ENCODE measurements at regions of chr1 and their contacts with region 1.

Region 1: DNA sequence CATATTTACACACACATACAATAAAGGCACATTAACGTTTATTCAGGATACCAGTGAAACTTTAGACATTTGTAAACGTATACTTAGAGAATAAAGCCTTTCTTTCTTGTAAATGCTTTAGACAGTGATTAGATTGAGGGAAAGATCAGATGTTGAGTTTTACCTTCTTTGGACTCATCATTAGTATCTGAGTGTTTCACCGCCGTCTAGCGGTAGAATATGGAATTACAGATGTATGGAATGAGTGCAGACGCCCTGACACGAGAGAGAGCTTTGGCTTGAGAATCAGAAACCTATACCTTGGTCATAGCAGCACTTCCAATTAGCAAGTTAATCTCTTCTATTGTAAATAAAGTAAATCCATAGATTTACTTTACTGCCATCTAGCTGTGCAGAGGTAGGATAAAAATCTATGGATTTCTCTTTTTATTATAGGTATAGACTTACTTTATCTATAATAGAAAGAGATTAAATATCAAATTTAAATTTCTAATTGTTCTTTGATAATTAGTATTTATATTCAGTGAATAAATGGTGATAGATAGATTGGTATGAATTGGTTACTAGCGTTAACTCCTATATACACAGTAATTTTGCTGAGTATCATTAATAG is 12.6 kb downstream of the FLG2 start:
- H3K4me3 ChIP-seq: no peak overlapping the region
- H3K27ac ChIP-seq: no peak overlapping the region
- H3K4me1 ChIP-seq: no peaks in the 10 kb centered on the region
- CTCF ChIP-seq: no peak

Region 2: GRCh38 chr1:152367434-152367833 is 20.2 kb after region 1 on chr1:
- CTCF ChIA-PET with region 1: interaction called, 17 read pairs
- POLR2A ChIA-PET with region 1: no interaction called
- H3K4me3 ChIP-seq: no peak overlapping the region
- H3K27ac ChIP-seq: no peak overlapping the region
- H3K4me1 ChIP-seq: no peaks in the 10 kb centered on the region
- CTCF ChIP-seq: no peak

Region 3: DNA sequence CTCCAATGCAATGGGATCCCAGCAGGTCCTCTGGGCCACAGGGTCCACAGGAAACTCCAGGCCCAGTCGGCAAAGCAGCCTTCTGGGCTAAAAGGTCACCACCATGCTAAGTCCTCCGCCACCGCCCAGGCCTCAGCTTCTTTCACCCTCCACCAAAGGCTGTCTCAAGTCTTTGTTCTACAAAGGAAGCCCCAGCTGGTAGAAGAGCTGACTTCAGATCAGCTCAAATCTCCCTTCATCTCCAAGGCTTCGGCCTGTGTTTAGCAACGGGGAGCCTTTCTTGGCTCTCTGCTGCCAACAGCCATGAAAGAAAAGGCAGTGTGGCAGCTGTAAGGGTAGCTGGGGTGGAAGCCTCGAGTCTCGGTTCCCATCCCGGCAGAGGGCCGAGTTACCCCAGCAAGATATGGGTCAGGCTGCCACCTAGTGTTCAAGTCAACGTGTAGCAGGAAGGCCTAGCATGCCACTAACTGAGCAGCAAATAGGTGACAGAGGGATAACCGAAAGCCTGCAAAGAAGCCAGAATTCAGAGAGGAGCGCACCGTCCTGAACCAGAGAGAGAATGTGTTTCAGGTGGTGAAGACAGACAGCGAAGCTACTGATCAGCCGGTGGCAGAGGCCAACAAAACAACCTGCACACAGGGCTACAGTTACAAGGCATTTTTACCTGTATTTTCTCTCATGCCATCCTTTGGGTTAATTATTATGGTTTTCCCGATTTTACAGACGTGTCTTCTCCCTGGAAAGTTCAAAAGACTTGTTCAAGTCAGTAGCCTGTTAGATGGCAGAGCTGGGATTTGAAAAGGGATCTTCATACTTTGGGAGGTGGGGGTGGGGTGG is 93.6 kb after region 1 on chr1:
- CTCF ChIA-PET with region 1: interaction called, 19 read pairs
- POLR2A ChIA-PET with region 1: no interaction called
- H3K4me3 ChIP-seq: no peak overlapping the region
- H3K27ac ChIP-seq: no peak overlapping the region
- H3K4me1 ChIP-seq: no peaks in the 10 kb centered on the region
- CTCF ChIP-seq: peak; percentile 79

Region 4: DNA sequence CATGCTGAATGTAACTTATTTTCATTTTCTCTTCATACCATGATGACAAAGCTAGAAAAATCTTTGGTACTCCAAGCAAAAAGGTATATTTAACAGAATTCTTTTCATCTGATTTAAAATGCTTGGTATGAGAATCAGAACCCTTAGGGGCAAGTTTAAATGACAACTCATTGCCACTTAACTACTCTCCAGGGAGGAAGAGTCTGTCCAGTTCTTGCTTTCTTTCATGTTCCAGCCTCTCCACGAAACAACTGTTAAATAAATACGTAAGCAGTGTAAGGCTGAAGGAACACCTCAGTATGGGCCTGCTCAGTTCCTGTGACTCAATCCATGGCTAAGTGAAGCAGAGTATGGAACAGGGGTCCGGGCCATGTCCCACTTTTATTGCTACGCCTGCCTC is 352.5 kb after region 1 on chr1:
- CTCF ChIA-PET with region 1: no interaction called
- POLR2A ChIA-PET with region 1: no interaction called
- H3K4me3 ChIP-seq: no peak overlapping the region
- H3K27ac ChIP-seq: no peak overlapping the region
- H3K4me1 ChIP-seq: no peaks in the 10 kb centered on the region
- CTCF ChIP-seq: no peak